ENCODE measurements at regions of chr15 and their contacts with region 1.

Region 1: GRCh38 chr15:33132722-33133345 is 61.7 kb downstream of the FMN1 start:
- DNase-seq: peak; percentile 26
- H3K4me3 ChIP-seq: no peak overlapping the region
- H3K27ac ChIP-seq: no peak overlapping the region
- H3K4me1 ChIP-seq: no peaks in the 10 kb centered on the region
- CTCF ChIP-seq: peak; percentile 78

Region 2: DNA sequence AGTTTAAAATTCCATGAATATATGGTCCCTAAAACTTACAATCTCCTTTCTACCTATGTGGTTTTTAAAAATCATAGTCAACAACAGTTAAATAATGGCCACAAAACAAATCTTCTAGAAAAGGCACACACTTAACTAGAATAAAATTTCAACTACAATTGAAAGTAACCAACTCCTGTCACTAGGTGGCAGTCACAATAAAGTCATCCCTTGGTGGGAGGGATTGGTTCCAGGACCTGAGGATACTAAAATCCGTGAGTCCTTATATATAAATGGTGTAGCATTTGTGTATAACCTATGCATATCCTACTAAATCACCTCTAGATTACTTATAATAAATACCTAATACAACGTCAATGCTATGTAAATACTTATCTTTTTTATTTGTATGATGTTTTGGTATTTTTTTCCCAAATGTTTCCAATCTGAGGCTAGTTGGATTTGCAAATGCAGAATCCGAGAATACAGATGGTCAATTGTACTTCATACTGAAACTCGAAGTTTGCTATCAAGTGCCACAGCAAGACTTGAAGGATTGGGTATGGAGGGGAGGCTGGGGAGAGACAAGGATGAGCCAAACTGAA is 110.9 kb before region 1 on chr15:
- CTCF ChIA-PET with region 1: no interaction called
- POLR2A ChIA-PET with region 1: no interaction called
- intact Hi-C with region 1: loop called (anchors 5 kb)
- DNase-seq: peak; percentile 49
- H3K4me3 ChIP-seq: no peak overlapping the region
- H3K27ac ChIP-seq: no peak overlapping the region
- H3K4me1 ChIP-seq: no peaks in the 10 kb centered on the region
- CTCF ChIP-seq: peak; percentile 91

Region 3: GRCh38 chr15:33182926-33183325 is 50.1 kb after region 1 on chr15:
- CTCF ChIA-PET with region 1: no interaction called
- POLR2A ChIA-PET with region 1: interaction called, 10 read pairs
- intact Hi-C with region 1: no loop called
- DNase-seq: no peak
- H3K4me3 ChIP-seq: no peak overlapping the region
- H3K27ac ChIP-seq: no peak overlapping the region
- H3K4me1 ChIP-seq: peaks cover 21% of the 10 kb centered on the region
- CTCF ChIP-seq: no peak

Region 4: GRCh38 chr15:33330931-33331330 is 198.1 kb after region 1 on chr15:
- CTCF ChIA-PET with region 1: no interaction called
- POLR2A ChIA-PET with region 1: no interaction called
- intact Hi-C with region 1: no loop called
- DNase-seq: no peak
- H3K4me3 ChIP-seq: no peak overlapping the region
- H3K27ac ChIP-seq: no peak overlapping the region
- H3K4me1 ChIP-seq: peaks cover 33% of the 10 kb centered on the region
- CTCF ChIP-seq: no peak

Measured in OCI-LY7 (cell line).